Right lobe of liver (tissue), 6 donors: ENCODE measurements at regions of chr11 and their contacts with region 1.

Region 1: GRCh38 chr11:33959855-33960400 is 68.1 kb upstream of the LMO2 start:
- DNase-seq: no peak
- ATAC-seq: peak; percentile 30 to 55 (median 42)
- H3K4me3 ChIP-seq: no peak overlapping the region
- H3K27ac ChIP-seq: no peak overlapping the region
- H3K4me1 ChIP-seq: no peaks in the 10 kb centered on the region
- H3K27me3 ChIP-seq: no peaks in the 10 kb centered on the region
- CTCF ChIP-seq: no peak
- POLR2A ChIP-seq: no peak

Region 2: GRCh38 chr11:33857933-33858371 is 102.0 kb before region 1 on chr11:
- intact Hi-C with region 1: loop called (anchors 10 kb)
- DNase-seq: peak; percentile 78 to 79 (median 78)
- ATAC-seq: peak; percentile 85 to 92 (median 88)
- H3K4me3 ChIP-seq: no peak overlapping the region
- H3K27ac ChIP-seq: no peak overlapping the region
- H3K4me1 ChIP-seq: peaks cover 0 to 11% (median 0%) of the 10 kb centered on the region in 4 donors
- H3K27me3 ChIP-seq: no peaks in the 10 kb centered on the region
- CTCF ChIP-seq: peak; percentile 82 to 97 (median 94)
- POLR2A ChIP-seq: no peak